Heart left ventricle (tissue), 16 donors: ENCODE measurements at regions of chr9 and their contacts with region 1.

Region 1: GRCh38 chr9:20144197-20144596 is 355.4 kb upstream of the SLC24A2 start:
- DNase-seq: no peak
- ATAC-seq: no peak
- H3K4me3 ChIP-seq: no peak overlapping the region
- H3K27ac ChIP-seq: no peak overlapping the region
- H3K4me1 ChIP-seq: peaks cover 0 to 5% (median 0%) of the 10 kb centered on the region in 12 donors
- H3K27me3 ChIP-seq: no peaks in the 10 kb centered on the region
- CTCF ChIP-seq: no peak
- POLR2A ChIP-seq: no peak

Region 2: DNA sequence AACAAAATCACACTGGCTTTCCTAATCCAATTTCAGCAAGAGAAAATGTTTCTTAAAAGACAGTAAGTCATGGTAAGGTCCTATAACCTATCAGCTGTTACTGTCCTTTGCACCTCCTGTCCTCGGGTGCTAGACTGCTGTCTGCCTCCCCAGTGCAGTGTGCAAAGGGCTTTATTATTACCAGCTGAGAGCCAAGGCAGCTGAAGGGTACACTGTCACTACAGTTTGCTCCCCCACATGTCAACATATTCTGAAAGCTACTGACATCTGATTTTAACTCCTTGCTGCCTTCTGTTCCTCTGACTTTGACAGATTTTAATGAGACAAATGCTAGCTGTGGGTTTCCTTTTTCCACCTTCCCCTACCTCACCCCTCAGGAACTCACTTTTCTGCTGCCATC is 34.0 kb after region 1 on chr9:
- intact Hi-C with region 1: loop called in 1 of 10 experiments (anchors 2 kb)
- DNase-seq: no peak
- ATAC-seq: no peak
- H3K4me3 ChIP-seq: no peak overlapping the region
- H3K27ac ChIP-seq: no peak overlapping the region
- H3K4me1 ChIP-seq: no peaks in the 10 kb centered on the region
- H3K27me3 ChIP-seq: no peaks in the 10 kb centered on the region
- CTCF ChIP-seq: no peak
- POLR2A ChIP-seq: no peak

Region 3: DNA sequence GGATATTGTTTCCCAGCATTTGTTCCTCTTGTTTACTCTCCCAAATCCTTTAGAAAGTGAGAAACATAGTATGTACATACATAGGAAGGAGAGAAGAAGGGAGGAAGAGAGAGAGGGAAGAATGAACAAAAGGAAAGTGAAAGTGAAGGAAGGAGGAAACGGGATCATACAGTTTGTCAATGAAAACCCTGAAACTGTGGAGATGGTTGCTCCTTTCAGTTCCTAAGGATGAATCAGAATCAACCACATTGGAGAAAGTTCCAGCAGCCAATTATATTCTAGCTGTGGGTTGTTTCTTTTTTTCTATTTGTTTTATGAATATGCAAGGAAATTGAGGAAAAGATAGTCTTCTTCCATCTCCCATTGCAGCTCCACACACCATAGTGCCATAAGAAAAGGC is 81.6 kb after region 1 on chr9:
- intact Hi-C with region 1: no loop called
- DNase-seq: no peak
- ATAC-seq: no peak
- H3K4me3 ChIP-seq: peak overlapping the region in 1 of 12 donors; percentile 9
- H3K27ac ChIP-seq: no peak overlapping the region
- H3K4me1 ChIP-seq: peaks cover 0 to 8% (median 0%) of the 10 kb centered on the region in 12 donors
- H3K27me3 ChIP-seq: no peaks in the 10 kb centered on the region
- CTCF ChIP-seq: no peak
- POLR2A ChIP-seq: no peak